Astrocyte of the cerebellum (primary cell): ENCODE measurements at regions of chr16 and their contacts with region 1.

Region 1: GRCh38 chr16:10541366-10541765 is 39.0 kb downstream of the EMP2 start:
- DNase-seq: no peak
- H3K4me3 ChIP-seq: no peak overlapping the region
- CTCF ChIP-seq: no peak

Region 2: GRCh38 chr16:10600533-10601443 is 59.4 kb after region 1 on chr16:
- in situ Hi-C with region 1: no loop called
- DNase-seq: no peak
- H3K4me3 ChIP-seq: no peak overlapping the region
- CTCF ChIP-seq: no peak

Region 3: GRCh38 chr16:10625593-10626273 is 84.4 kb after region 1 on chr16:
- in situ Hi-C with region 1: loop called (anchors 25 kb)
- DNase-seq: no peak
- H3K4me3 ChIP-seq: no peak overlapping the region
- CTCF ChIP-seq: no peak

Region 4: DNA sequence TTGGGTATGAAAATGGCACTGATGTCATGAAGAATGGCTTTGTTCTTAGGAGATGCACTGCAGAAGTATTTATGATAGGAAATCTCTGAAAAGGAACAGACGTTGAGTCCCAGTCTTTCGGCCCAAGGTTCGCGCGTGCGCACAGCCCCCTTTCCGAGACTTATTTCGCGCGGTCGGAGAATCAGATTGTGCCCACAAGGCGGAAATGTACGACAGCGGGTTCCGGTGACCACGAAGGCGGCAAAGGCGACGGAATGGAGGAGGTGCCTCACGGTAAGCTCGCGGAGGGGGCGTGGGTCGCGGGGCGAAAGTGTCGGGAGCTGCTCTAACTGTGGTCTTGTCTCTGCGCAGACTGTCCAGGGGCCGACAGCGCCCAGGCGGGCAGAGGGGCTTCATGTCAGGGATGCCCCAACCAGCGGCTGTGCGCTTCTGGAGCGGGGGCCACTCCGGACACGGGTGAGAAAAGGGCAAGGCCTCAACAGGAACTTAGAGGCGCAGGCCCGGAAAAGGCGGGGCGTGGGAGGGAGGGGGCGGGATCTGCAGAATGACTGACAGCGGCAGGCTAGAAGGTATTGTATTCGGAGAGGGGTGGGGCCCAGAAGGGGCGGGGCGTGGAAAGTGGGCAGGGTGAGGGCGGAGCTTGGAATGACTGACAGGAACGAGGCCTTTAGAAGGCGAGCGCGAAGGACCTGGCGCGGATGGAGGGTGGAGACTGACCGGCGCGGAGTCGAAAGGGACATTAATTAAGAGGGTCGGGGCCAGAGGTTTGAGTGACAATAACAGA is 202.4 kb after region 1 on chr16 and contains the start of gene NUBP1:
- in situ Hi-C with region 1: loop called (anchors 25 kb)
- DNase-seq: peak; percentile 95
- H3K4me3 ChIP-seq: peak within 1 kb of the TSS; percentile 58
- CTCF ChIP-seq: no peak